Activated CD4-positive, alpha-beta T cell treated with anti-CD3 and anti-CD28 coated beads, Interleukin-2, amount 10 ng/mL, durations not matched to agents 24 days and 14 days (primary cell): ENCODE measurements at regions of chr4 and their contacts with region 1.

Region 1: GRCh38 chr4:153750197-153750817 is 9.5 kb downstream of the RNF175 start:
- DNase-seq: peak; percentile 91
- H3K4me3 Mint-ChIP-seq: no peak overlapping the region
- H3K27ac Mint-ChIP-seq: no peak overlapping the region
- H3K4me1 Mint-ChIP-seq: no peaks in the 10 kb centered on the region
- H3K27me3 Mint-ChIP-seq: peaks cover 16% of the 10 kb centered on the region

Region 2: DNA sequence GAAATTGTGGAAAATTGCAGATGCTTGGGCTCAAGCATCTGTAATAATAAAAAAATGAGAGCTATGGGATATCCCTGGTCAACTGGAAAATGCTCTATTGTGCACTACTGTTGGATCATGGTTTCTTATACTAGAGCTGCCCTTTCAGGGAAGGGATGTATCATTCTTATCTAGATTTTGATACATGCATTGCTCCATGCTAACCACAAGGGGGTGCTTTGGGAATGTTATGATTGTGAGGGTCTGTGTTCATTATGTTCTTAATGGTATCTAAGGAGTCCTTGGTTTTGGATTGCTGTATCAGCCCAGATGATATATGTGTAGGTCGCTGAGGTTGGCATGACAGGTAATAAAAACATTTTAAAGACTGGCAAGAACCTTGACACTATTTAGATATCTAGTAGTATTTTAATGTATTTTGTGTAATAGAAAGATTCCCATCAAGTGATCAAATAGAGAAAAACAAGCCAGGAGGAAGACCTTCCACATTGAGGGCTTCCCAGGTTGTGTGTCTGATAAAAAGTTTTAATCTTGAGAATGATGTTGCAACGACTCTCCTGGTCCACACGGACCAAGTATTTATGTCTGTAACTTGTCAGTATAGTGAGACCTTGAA is 115.5 kb before region 1 on chr4:
- intact Hi-C with region 1: loop called (anchors 1 kb)
- DNase-seq: peak; percentile 56
- H3K4me3 Mint-ChIP-seq: no peak overlapping the region
- H3K27ac Mint-ChIP-seq: no peak overlapping the region
- H3K4me1 Mint-ChIP-seq: no peaks in the 10 kb centered on the region
- H3K27me3 Mint-ChIP-seq: no peaks in the 10 kb centered on the region

Region 3: DNA sequence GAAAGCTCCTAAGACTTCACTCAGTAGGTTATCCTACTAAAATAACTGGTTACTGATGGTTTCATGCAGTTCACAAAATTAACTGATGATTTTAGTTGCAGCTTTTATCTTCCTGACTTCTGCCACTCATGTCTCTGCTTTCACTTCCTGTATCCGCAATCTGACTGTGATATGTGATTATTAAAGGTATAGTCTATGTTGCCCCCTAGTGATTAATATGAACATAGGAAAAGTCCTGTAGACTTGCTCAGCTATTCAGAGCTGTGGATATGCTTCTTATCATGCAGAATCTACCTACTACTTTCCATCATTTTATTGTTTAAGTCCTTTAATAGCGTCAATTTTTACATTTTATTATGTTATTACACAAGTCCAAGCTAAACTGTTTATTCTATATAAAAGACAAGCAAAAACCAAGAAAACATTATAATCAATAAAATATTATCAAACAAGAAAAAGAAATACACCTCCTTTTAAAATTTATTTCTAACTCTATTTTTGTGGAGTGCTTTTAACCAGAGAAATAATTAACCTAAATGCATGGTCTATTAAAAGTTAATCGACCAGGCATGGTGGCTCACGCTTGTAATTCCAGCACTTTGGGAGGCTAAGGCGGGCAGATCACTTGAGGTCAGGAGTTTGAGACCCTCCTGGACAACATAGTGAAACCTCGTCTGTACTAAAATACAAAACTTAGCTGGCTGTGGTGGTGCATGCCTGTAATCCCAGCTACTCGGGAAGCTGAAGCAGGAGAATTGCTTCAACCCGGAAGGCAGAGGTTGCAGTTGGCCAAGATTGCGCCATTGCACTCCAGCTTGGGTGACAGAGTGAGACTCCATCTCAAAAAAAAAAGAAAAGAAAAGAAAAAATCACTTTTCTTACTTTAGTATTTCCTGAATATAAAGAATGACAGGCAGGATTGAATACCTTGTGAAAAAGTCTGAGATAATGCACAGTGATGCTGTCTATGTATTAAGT is 106.6 kb before region 1 on chr4:
- intact Hi-C with region 1: loop called (anchors 2 kb)
- DNase-seq: no peak
- H3K4me3 Mint-ChIP-seq: no peak overlapping the region
- H3K27ac Mint-ChIP-seq: no peak overlapping the region
- H3K4me1 Mint-ChIP-seq: peaks cover 19% of the 10 kb centered on the region
- H3K27me3 Mint-ChIP-seq: no peaks in the 10 kb centered on the region